Testis (tissue), 5 donors: ENCODE measurements at regions of chr18 and their contacts with region 1.

Region 1: GRCh38 chr18:76351961-76352581 is 143.0 kb downstream of the ZNF516 start:
- DNase-seq: peak; percentile 85
- H3K4me3 ChIP-seq: no peak overlapping the region
- H3K27ac ChIP-seq: no peak overlapping the region
- H3K4me1 ChIP-seq: peaks cover 6% of the 10 kb centered on the region
- H3K27me3 ChIP-seq: no peaks in the 10 kb centered on the region
- CTCF ChIP-seq: no peak
- POLR2A ChIP-seq: no peak

Region 2: DNA sequence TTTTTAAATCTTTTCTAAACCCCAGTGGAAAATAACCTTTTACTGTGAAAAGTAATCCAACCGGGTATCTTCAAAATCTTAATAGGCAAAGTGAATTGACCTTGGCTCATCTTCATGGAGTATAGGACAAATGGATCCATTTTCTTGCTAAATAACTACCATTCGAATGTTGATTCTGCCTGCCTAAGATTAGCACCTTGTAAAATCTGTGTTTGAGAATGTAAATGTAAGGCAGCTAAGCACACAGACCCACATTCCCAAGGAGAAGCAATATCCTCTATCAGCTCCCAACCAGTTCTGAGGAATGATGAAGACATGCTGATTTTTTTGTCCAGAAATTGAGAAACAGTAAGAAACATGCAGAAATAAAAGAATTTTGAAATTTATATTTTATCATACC is 414.8 kb before region 1 on chr18:
- intact Hi-C with region 1: no loop called
- DNase-seq: no peak
- H3K4me3 ChIP-seq: no peak overlapping the region
- H3K27ac ChIP-seq: no peak overlapping the region
- H3K4me1 ChIP-seq: no peaks in the 10 kb centered on the region
- H3K27me3 ChIP-seq: no peaks in the 10 kb centered on the region
- CTCF ChIP-seq: no peak
- POLR2A ChIP-seq: no peak

Region 3: DNA sequence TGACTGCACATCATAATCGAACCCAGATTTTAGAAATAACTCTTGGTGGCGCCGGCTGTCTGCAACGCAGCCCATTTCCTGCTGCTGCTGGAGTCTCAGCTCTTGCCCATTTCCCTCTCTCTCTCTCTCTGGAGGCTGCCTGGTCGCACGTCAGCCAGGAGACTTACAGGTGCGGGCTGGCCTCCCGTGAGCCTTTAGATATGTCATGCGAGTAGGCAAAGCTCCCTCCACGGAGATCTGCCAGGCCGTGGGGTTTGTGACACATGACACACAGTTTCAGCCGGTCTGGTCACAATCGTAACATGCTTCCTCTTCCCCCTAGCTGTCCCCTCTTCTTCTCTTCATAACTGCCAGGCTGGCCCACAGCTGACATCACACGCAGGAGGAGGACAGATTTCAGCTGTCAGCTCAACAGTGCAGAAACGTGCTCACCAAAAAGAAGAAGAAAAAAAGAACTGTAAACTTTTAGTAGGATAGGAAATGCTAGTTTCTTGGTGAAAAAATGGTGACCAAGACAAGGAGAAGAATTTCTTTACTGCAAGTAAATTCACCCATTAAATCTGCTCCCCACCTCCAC is 346.4 kb before region 1 on chr18:
- intact Hi-C with region 1: no loop called
- DNase-seq: no peak
- H3K4me3 ChIP-seq: no peak overlapping the region
- H3K27ac ChIP-seq: no peak overlapping the region
- H3K4me1 ChIP-seq: no peaks in the 10 kb centered on the region
- H3K27me3 ChIP-seq: no peaks in the 10 kb centered on the region
- CTCF ChIP-seq: no peak
- POLR2A ChIP-seq: no peak

Region 4: GRCh38 chr18:76265497-76266235 is 86.4 kb before region 1 on chr18:
- intact Hi-C with region 1: loop called (anchors 10 kb)
- DNase-seq: peak; percentile 64
- H3K4me3 ChIP-seq: peak overlapping the region; percentile 9 to 13
- H3K27ac ChIP-seq: peak overlapping the region; percentile 89 to 93
- H3K4me1 ChIP-seq: peaks cover 23% of the 10 kb centered on the region
- H3K27me3 ChIP-seq: no peaks in the 10 kb centered on the region
- CTCF ChIP-seq: no peak
- POLR2A ChIP-seq: no peak